ENCODE measurements at regions of chr3 and their contacts with region 1.

Region 1: DNA sequence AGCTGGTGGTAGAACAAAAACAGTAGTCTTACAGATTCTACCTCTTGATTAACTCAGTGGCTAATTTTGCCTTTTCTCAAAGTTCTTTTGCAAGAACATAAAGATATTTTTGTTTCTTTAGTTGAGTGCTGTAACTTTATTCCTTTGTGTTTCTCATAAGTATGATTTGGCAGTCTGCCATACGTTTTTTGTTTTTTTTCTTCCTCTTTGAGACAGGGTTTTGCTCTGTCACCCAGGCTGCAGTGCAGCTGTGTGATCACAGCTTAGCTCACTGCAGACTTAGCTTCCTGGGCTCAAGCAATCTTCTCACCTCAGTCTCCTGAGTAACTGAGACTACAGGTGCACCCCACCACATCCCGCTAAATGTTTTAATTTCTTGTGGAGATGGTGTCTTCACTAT is 22.4 kb downstream of the B3GNT5 start:
- DNase-seq: peak; percentile 77
- H3K4me3 Mint-ChIP-seq: peak overlapping the region; percentile 19
- H3K27ac Mint-ChIP-seq: peak overlapping the region; percentile 17
- H3K4me1 Mint-ChIP-seq: peaks cover 41% of the 10 kb centered on the region
- H3K27me3 Mint-ChIP-seq: no peaks in the 10 kb centered on the region
- CTCF ChIP-seq: no peak

Region 2: GRCh38 chr3:182414586-182414985 is 860.8 kb before region 1 on chr3:
- CTCF ChIA-PET with region 1: no interaction called
- POLR2A ChIA-PET with region 1: no interaction called
- intact Hi-C with region 1: no loop called
- DNase-seq: no peak
- H3K4me3 Mint-ChIP-seq: no peak overlapping the region
- H3K27ac Mint-ChIP-seq: no peak overlapping the region
- H3K4me1 Mint-ChIP-seq: peaks cover 6% of the 10 kb centered on the region
- H3K27me3 Mint-ChIP-seq: no peaks in the 10 kb centered on the region
- CTCF ChIP-seq: no peak

Region 3: DNA sequence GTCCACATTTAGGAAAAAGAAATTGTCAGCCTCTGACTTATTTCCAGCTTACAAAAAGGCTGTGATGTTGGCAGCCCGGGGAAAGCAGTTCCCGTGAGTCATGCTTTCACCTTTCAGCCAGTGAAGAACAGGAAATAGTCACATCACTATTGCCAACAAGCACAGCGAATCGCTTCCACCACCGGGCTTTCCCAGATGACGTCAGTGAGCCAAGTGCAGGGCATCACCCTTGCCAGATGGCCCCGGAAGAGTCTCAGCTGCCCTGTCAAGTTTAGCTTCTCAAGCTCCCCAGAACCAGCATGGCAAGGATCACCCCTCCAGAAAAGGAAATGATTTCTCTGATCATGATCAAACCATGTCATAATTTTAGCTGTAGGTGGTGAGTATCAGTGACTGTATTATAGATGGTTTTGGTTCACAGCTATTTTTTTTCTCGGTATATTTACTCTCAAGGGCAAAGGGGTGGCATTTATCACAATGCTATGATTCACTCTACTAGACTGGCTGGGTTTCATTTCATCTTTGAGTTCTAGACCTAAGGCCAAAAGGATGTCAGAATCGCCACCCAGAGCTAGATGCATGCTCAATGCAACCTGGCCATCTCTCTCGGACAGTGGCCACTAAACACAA is 10.5 kb after region 1 on chr3:
- CTCF ChIA-PET with region 1: no interaction called
- POLR2A ChIA-PET with region 1: interaction called, 41 read pairs
- intact Hi-C with region 1: no loop called
- DNase-seq: peak; percentile 99
- H3K4me3 Mint-ChIP-seq: peak overlapping the region; percentile 48
- H3K27ac Mint-ChIP-seq: peak overlapping the region; percentile 91
- H3K4me1 Mint-ChIP-seq: peaks cover 31% of the 10 kb centered on the region
- H3K27me3 Mint-ChIP-seq: no peaks in the 10 kb centered on the region
- CTCF ChIP-seq: no peak

Region 4: GRCh38 chr3:183291497-183292040 is 16.2 kb after region 1 on chr3:
- CTCF ChIA-PET with region 1: no interaction called
- POLR2A ChIA-PET with region 1: interaction called, 41 read pairs
- intact Hi-C with region 1: no loop called
- DNase-seq: peak; percentile 66
- H3K4me3 Mint-ChIP-seq: peak overlapping the region; percentile 0
- H3K27ac Mint-ChIP-seq: peak overlapping the region; percentile 86
- H3K4me1 Mint-ChIP-seq: peaks cover 45% of the 10 kb centered on the region
- H3K27me3 Mint-ChIP-seq: no peaks in the 10 kb centered on the region
- CTCF ChIP-seq: no peak

Region 5: DNA sequence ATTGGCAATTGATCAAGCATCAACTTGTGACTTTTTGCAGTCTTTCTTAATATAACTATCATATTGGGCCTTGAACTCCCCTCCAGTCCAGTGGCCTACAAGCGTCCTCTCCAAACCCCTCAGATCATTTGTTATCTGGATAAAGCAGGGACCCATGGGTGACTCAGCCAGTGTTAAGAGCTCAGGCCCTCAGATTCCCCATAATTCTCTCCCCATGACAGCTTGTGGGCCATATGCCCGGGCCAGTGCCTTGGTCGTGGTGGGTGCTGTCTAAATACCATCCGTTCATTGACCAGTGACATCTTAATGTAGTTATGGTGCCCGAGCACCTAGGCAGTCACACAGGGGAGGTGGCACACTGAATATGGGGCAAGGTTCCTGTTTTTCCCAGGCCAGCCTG is 134.9 kb after region 1 on chr3:
- CTCF ChIA-PET with region 1: no interaction called
- POLR2A ChIA-PET with region 1: no interaction called
- intact Hi-C with region 1: no loop called
- DNase-seq: no peak
- H3K4me3 Mint-ChIP-seq: no peak overlapping the region
- H3K27ac Mint-ChIP-seq: no peak overlapping the region
- H3K4me1 Mint-ChIP-seq: no peaks in the 10 kb centered on the region
- H3K27me3 Mint-ChIP-seq: peaks cover 16% of the 10 kb centered on the region
- CTCF ChIP-seq: no peak